ENCODE measurements at regions of chr2 and their contacts with region 1.

Region 1: DNA sequence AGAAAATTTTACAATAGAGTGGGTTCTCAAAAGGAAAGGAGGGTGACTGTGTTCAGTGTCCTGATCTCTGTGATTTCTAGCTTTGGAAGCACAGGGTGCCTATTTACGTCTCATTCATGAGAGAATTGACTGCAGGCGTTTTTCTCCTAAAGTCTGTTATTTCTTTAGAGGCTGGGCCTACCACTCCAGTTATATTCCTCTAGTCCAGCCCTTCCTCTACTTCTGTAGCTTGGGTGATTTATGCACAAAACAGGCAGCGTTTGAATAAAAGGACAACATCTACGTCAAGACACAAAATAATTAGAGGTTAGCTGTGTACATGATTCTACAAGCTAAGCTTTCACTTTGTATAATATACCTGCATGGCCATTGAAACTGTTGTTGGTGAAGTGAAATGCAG is 32.5 kb upstream of the FAM117B start:
- H3K4me3 ChIP-seq: no peak overlapping the region
- H3K27ac ChIP-seq: no peak overlapping the region
- H3K4me1 ChIP-seq: no peaks in the 10 kb centered on the region
- CTCF ChIP-seq: no peak

Region 2: GRCh38 chr2:202588647-202589581 is 13.4 kb before region 1 on chr2:
- CTCF ChIA-PET with region 1: interaction called, 15 read pairs
- POLR2A ChIA-PET with region 1: no interaction called
- H3K4me3 ChIP-seq: no peak overlapping the region
- H3K27ac ChIP-seq: no peak overlapping the region
- H3K4me1 ChIP-seq: no peaks in the 10 kb centered on the region
- CTCF ChIP-seq: peak; percentile 84

Measured in HEK293 (cell line).